ENCODE measurements at regions of chr9 and their contacts with region 1.

Region 1: DNA sequence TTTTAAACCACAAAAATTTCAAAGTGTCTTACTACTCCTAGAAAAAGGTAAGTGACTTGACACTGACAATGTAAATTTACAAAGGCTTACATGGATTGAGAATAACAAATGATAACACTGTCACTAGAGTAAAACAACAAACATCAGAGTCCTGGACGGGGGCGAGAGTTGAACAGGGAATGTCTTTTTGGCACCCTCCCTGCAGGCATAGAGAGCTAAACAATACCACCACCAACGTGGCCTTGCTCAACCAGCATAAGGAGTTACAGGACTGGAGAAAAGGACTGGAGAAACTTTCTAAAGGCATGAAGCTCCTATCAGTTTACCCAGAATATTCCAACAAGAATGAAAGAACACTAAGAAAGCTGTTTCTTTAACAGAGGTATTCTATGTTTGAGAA is 55.3 kb downstream of the PTBP3 start:
- DNase-seq: no peak
- H3K4me3 Mint-ChIP-seq: no peak overlapping the region
- H3K27ac Mint-ChIP-seq: no peak overlapping the region
- H3K4me1 Mint-ChIP-seq: peaks cover 52% of the 10 kb centered on the region
- H3K27me3 Mint-ChIP-seq: no peaks in the 10 kb centered on the region

Region 2: GRCh38 chr9:112203536-112203935 is 74.6 kb before region 1 on chr9:
- CTCF ChIA-PET with region 1: no interaction called
- intact Hi-C with region 1: no loop called
- DNase-seq: no peak
- H3K4me3 Mint-ChIP-seq: no peak overlapping the region
- H3K27ac Mint-ChIP-seq: no peak overlapping the region
- H3K4me1 Mint-ChIP-seq: no peaks in the 10 kb centered on the region
- H3K27me3 Mint-ChIP-seq: no peaks in the 10 kb centered on the region

Region 3: GRCh38 chr9:112327718-112328464 is 49.7 kb after region 1 on chr9:
- CTCF ChIA-PET with region 1: interaction called, 3 read pairs
- intact Hi-C with region 1: loop called (anchors 2 kb)
- DNase-seq: no peak
- H3K4me3 Mint-ChIP-seq: no peak overlapping the region
- H3K27ac Mint-ChIP-seq: peak overlapping the region; percentile 50
- H3K4me1 Mint-ChIP-seq: peaks cover 59% of the 10 kb centered on the region
- H3K27me3 Mint-ChIP-seq: no peaks in the 10 kb centered on the region

Region 4: DNA sequence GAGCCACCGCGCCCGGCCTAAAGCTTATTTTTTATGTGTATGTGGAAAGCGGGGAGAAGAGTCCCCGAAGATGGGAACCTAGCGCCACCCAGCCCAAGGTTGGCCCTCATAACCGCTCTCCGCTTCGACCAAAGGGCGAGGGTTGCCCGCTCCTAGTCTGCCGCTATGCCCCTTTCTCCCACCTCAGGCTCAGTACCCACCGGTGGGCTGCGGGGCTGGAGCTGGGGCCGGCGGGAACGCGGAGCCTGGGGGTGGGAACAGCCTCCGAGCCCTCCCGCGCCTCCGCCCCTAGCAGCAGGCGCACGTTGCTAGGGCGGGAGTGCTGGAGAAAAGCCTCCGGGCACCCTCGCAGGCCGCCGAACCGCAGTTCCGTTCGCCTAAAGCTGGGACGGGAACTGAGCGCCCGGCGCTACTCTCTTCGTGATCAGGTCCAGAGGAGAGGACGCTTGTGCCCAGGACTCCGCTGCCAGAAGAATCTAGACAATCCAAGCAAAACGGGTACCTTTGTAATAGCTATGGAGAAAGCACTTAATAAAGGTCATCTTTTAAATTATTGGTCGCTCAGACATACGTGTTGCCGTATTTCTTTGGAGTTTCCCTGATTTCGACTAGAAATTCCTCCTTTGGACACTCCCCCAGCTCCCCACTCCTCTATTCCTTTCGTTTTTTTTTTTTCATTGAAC is 1062.0 kb after region 1 on chr9 and contains the start of gene WDR31:
- CTCF ChIA-PET with region 1: no interaction called
- intact Hi-C with region 1: no loop called
- DNase-seq: peak; percentile 85
- H3K4me3 Mint-ChIP-seq: peak within 1 kb of the TSS; percentile 84
- H3K27ac Mint-ChIP-seq: peak within 1 kb of the TSS; percentile 55
- H3K4me1 Mint-ChIP-seq: peaks cover 35% of the 10 kb centered on the region
- H3K27me3 Mint-ChIP-seq: peaks cover 4% of the 10 kb centered on the region
- total RNA-seq, gene WDR31: 0.81 to 0.88 TPM

Measured in activated naive CD4-positive, alpha-beta T cell treated with anti-CD3 and anti-CD28 coated beads for 36 hours (primary cell).